ENCODE measurements at regions of chr2 and their contacts with region 1.

Region 1: DNA sequence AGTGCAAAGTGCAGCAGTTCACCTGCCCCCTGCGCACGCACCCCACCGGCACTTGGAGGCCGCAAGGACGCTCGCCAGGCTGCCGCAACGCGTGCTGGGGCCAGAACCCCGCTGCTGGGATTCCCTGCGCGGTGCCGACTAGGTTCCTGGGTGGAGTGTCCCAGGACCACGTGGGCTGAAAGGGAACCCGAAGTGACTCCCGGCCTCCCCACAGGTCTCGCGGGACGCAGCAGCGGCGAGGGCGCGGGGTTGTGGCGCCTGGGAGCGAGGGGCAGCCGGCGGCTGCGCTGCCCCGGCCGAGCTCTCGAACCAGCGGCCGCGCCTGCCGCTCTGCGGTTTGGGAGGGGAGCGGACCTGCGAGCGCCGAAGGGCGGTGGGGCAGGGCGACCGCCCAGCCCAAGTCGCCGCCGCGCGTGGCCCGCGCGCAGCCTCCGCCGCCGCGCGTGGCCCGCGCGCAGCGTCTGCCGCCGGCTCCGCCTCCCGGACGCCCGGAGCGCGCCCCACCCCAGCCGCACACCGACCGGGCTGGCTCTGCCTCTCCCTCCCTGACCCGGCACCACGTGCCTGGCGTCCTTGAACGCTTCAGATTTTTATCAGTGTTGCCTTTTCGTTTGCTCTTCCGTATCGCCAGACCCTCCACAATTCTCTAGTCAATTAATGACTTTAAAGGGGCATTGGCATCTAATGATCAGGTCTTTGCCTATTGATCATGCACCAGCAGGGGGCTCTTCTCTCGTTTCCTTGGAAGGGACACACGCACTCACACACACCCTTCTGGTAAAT is at the start of gene FTCDNL1:
- DNase-seq: peak; percentile 55 to 83 (median 70)
- H3K4me3 ChIP-seq: peak within 1 kb of the TSS; percentile 56 to 91 (median 81)
- H3K27ac ChIP-seq: peak within 1 kb of the TSS; percentile 24 to 95 (median 89)
- H3K27me3 ChIP-seq: no peaks in the 10 kb centered on the region
- CTCF ChIP-seq: peak in 55 of 56 donors; percentile 39 to 76 (median 65)
- total RNA-seq, gene FTCDNL1: 7.2 to 25.1 (median 14.7) TPM

Region 2: GRCh38 chr2:198309673-198310280 is 1541.1 kb before region 1 on chr2:
- intact Hi-C with region 1: loop called in 1 of 2 experiments (anchors 5 kb)
- DNase-seq: peak in 4 of 10 donors; percentile 14 to 68 (median 46)
- H3K4me3 ChIP-seq: peak overlapping the region in 1 of 59 donors; percentile 22
- H3K27ac ChIP-seq: no peak overlapping the region
- H3K27me3 ChIP-seq: peaks cover 0 to 8% (median 0%) of the 10 kb centered on the region in 45 donors
- CTCF ChIP-seq: peak; percentile 73 to 97 (median 88)

Region 3: GRCh38 chr2:199602271-199602895 is 248.5 kb before region 1 on chr2:
- intact Hi-C with region 1: loop called in 1 of 2 experiments (anchors 10 kb)
- DNase-seq: peak in 2 of 10 donors; percentile 30 to 39
- H3K4me3 ChIP-seq: peak overlapping the region in 2 of 59 donors; percentile 4 to 25
- H3K27ac ChIP-seq: peak overlapping the region in 52 of 59 donors; percentile 6 to 88 (median 70)
- H3K27me3 ChIP-seq: peaks cover 0 to 6% (median 0%) of the 10 kb centered on the region in 45 donors
- CTCF ChIP-seq: peak in 15 of 56 donors; percentile 7 to 42 (median 21)

Region 4: DNA sequence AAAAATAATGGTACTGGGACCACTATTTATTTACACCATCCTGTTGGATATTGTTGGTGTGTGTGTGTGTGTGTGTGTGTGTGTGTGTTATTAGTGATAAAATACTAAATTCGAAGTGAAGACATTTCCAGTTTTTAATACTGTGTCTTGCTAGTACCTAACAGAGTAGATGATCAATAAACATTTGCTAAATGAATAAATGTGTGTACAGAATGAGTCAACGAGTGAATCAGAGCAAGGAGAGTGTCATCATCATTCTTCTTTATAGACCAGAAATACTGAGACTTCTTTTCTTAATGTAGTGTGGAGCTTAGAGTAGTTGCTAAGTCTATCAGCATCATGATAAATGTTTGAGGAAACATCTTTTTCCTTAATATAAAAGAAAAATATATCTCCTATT is 223.5 kb before region 1 on chr2:
- intact Hi-C with region 1: no loop called
- DNase-seq: no peak
- H3K4me3 ChIP-seq: no peak overlapping the region
- H3K27ac ChIP-seq: no peak overlapping the region
- H3K27me3 ChIP-seq: peaks cover 0 to 3% (median 0%) of the 10 kb centered on the region in 45 donors
- CTCF ChIP-seq: no peak

Region 5: GRCh38 chr2:199739413-199740110 is 111.3 kb before region 1 on chr2:
- intact Hi-C with region 1: loop called (anchors 5 kb)
- DNase-seq: peak; percentile 33 to 86 (median 78)
- H3K4me3 ChIP-seq: peak overlapping the region in 55 of 59 donors; percentile 2 to 60 (median 32)
- H3K27ac ChIP-seq: peak overlapping the region in 8 of 59 donors; percentile 12 to 63 (median 48)
- H3K27me3 ChIP-seq: no peaks in the 10 kb centered on the region
- CTCF ChIP-seq: peak; percentile 90 to 100 (median 98)

Region 6: DNA sequence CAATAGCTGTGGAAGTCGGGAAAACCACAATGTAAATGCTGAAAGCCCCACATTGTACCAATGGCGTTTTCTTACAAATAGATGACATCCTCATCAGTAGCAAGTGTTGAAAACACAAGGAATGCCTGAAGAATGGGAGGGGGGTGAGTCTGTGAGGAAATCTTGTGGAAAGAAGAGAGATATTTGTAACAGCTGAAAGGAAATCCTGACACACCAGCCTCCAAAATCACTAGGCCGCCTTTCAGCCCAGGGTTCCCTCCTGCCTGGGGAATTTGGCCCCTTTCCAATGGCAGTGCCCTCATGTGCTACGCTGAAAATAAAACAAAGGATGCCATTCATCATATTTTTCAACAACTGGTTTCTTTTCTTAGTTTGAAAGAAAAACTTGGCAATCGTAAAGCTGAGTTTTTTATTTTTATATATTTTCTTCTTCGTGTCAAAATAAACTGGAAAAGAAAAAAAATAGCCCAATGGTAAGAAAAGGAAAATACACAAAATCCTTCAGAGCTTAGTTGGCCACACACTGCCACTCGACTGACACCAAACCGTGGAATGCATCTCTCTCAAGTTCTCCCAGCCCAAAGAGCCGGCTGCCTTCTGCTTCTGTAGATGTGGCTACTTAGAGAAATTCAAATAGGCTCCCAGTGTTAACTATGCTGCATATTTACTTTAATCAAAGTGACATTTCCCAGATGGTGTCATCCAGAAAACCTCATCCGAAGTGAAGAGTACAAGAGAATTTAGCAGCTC is 51.9 kb before region 1 on chr2:
- intact Hi-C with region 1: loop called in 1 of 2 experiments (anchors 5 kb)
- DNase-seq: peak; percentile 18 to 67 (median 56)
- H3K4me3 ChIP-seq: peak overlapping the region in 37 of 59 donors; percentile 1 to 54 (median 28)
- H3K27ac ChIP-seq: peak overlapping the region in 58 of 59 donors; percentile 55 to 96 (median 85)
- H3K27me3 ChIP-seq: no peaks in the 10 kb centered on the region
- CTCF ChIP-seq: peak in 5 of 56 donors; percentile 8 to 26 (median 13)

Region 7: DNA sequence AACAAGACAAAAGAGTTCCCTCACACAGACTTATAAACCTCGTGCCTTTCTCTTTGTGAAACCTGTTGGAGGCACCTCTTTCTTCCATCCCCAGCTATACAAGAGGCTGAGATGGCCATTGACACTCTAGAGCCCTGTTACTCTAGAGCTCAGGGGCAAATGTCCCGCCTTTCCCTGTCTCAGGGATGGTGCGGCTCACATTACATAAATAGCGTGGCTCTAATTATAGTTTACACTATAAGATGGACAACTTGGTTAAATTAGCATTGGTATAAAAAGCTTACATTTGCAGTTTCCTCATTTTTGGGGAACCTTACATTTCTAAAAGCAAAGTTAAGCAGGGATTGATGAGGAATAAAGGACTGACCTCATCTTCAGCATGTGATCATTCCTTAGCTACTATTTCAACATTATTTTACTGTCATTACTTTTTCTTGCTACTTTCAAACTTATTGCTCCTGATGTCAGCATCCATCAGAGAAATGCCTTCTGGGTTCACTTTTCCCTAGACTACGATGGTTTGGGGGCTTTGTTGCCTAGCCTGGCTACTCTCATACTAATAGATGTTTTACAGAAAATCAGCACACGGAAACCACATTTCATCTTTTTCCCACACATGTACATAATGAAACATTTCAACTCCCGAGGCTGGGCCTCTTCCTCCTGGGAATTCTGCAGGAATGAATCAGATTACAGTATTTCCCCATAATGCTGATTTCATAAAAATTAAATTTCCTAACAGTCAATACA is 40.3 kb before region 1 on chr2:
- intact Hi-C with region 1: no loop called
- DNase-seq: no peak
- H3K4me3 ChIP-seq: no peak overlapping the region
- H3K27ac ChIP-seq: no peak overlapping the region
- H3K27me3 ChIP-seq: no peaks in the 10 kb centered on the region
- CTCF ChIP-seq: no peak

Region 8: DNA sequence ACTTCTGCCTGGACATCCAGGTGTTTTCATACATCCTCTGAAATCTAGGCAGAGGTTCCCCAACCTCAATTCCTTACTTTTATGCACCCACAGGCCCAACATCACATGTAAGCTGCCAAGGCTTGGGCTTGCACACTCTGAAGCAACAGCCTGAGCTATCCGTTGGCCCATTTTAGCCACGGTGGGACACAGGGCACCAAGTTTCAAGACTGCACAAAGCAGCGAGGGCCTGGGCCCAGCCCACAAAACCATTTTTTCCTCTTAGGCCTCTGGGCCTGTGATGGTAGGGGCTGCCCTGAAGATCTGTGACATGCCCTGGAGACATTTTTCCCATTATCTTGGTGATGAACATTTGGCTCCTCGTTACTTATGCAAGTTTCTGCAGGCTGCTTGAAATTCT is 66.1 kb after region 1 on chr2:
- intact Hi-C with region 1: no loop called
- DNase-seq: no peak
- H3K4me3 ChIP-seq: no peak overlapping the region
- H3K27ac ChIP-seq: no peak overlapping the region
- H3K27me3 ChIP-seq: no peaks in the 10 kb centered on the region
- CTCF ChIP-seq: no peak

Region 9: GRCh38 chr2:199932312-199932855 is 81.5 kb after region 1 on chr2:
- intact Hi-C with region 1: loop called in 1 of 2 experiments (anchors 2 kb)
- DNase-seq: peak; percentile 39 to 94 (median 84)
- H3K4me3 ChIP-seq: peak overlapping the region in 25 of 59 donors; percentile 3 to 42 (median 21)
- H3K27ac ChIP-seq: peak overlapping the region; percentile 60 to 97 (median 92)
- H3K27me3 ChIP-seq: no peaks in the 10 kb centered on the region
- CTCF ChIP-seq: peak in 2 of 56 donors; percentile 9 to 16

Measured in dorsolateral prefrontal cortex (tissue), 120 donors.